ENCODE measurements at regions of chr10 and their contacts with region 1.

Region 1: DNA sequence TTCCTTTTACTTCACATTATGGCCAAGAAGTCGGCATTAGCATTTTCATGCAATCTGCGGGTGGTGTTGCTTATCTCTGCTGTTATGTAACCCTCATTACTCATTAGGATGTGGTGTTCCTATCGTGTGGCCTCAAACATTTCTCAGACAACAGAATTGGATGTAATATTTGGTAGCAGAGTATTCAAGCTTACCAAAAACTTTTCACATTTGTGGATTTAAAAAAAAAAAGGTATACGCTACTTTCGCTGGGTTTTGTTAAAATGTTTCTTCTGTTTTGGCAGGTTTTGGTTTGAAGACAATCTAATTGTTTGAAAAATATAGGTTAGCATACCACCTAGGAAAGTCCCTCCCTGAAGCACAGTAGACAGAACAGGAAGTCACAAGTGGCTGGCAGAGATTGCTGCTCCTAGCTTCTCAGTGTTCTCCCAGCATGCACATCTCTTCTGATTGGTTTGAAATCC is 128.8 kb downstream of the GATA3 start:
- DNase-seq: peak; percentile 72
- H3K4me3 Mint-ChIP-seq: peak overlapping the region; percentile 14
- H3K27ac Mint-ChIP-seq: no peak overlapping the region
- H3K4me1 Mint-ChIP-seq: peaks cover 17% of the 10 kb centered on the region
- H3K27me3 Mint-ChIP-seq: peaks cover 17% of the 10 kb centered on the region

Region 2: GRCh38 chr10:8229153-8229552 is 45.9 kb after region 1 on chr10:
- intact Hi-C with region 1: loop called (anchors 5 kb)
- DNase-seq: peak; percentile 78
- H3K4me3 Mint-ChIP-seq: peak overlapping the region; percentile 5
- H3K27ac Mint-ChIP-seq: no peak overlapping the region
- H3K4me1 Mint-ChIP-seq: peaks cover 36% of the 10 kb centered on the region
- H3K27me3 Mint-ChIP-seq: peaks cover 3% of the 10 kb centered on the region

Region 3: DNA sequence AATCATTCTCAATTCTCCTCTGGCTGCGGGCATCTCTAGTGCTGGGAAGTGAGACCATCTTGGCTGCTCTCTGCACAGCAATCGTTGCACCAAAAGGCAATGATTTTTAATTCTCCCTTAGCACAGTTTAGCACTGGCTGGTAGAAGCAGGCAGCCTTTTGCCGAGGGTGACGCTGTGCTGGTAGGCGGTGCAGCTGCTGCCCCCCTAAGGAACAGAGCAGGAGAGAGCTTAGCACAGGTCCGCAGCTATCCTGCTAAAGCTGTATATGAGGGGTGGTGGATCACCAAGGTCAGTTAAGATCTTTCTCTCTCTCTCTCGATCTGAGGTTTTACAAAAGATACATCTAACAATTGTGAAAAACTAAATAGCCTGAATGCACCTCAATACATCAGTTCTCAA is 261.4 kb after region 1 on chr10:
- intact Hi-C with region 1: no loop called
- DNase-seq: peak; percentile 67
- H3K4me3 Mint-ChIP-seq: no peak overlapping the region
- H3K27ac Mint-ChIP-seq: no peak overlapping the region
- H3K4me1 Mint-ChIP-seq: no peaks in the 10 kb centered on the region
- H3K27me3 Mint-ChIP-seq: peaks cover 33% of the 10 kb centered on the region

Measured in activated CD4-positive, alpha-beta T cell treated with anti-CD3 and anti-CD28 coated beads, Interleukin-2, amount 10 ng/mL, durations not matched to agents 24 days and 14 days (primary cell).